ENCODE measurements at regions of chr9 and their contacts with region 1.

Region 1: DNA sequence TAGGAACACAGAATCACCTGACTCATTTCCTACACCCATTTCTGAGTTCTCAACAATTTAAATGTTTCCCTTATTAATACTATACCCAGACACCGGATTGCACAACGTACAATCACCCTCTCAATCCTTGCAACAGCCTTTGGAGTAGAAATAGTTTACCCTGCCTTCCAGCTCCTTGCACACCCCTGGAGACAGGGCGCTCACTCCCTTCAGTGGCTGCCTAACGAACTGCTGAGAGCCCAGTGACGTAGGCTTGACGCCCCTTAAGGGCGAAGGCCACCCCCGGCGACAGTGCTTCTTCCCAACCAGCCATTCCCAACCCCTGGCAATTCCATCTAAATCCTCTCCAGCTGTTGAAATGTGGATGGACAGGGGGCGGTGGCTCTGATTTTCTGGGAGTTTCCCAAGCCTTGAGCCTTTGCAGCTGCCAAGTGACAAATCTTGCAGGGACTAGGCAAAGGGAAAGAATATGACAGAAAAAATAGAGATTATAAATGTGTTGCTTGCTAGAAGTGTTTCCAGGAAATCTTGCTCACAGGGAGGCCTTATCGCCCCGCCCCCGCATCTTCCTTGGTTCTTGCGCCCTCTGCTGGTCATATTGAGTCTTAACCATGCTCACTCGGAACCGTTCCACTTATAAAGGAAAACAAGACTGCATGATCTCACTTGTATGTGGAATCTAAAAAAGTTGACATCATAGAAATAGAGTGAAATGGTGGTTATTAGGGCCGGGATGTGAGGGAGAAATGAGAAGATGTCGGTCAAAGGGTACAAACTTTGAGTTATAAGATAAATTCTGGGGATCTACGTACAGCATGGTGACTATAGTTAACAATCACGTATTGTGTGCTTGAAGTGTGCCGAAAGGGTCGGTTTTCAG is 7.6 kb upstream of the BARX1 start:
- H3K4me3 ChIP-seq: no peak overlapping the region
- H3K27ac ChIP-seq: no peak overlapping the region
- H3K4me1 ChIP-seq: no peaks in the 10 kb centered on the region
- CTCF ChIP-seq: 0 out of 2 replicates have a peak, but pooled peaks have one; percentile 7

Region 2: DNA sequence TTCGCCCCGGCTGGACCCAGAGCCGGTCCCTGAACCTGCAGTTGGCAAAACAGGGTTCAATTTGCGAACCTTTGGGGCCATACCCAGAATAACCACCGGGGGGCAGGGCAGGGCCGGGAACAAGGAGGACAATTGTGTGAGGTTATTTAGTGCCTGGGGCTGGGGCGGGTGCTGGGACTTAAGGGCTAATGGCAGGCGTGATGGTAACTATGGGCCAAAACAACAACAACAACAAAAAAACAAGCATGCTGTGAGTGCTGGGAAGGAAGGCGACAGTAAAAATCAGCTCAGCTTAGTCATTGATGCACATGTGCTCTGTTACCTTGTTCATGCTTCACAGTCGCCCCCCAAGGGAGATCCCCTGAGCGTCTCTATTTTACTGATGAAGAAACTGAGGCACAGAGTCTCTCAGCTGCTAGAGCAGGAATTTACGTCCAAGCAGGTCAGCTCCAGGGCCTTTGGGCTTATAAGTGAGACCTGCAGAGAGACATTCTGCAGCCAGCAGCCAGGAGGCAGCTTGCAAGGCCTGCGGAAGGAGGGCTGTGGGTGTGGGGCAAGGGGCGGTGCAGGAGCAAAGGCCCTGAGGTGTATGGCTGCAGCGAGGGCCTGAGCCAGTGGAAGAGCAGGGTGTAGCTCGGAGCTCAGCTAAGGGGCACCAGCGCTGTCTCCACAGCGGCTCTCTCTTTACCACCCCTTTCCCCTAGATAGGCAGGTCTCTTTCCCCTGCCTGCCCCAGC is 280.4 kb before region 1 on chr9:
- CTCF ChIA-PET with region 1: interaction called, 96 read pairs
- POLR2A ChIA-PET with region 1: no interaction called
- H3K4me3 ChIP-seq: no peak overlapping the region
- H3K27ac ChIP-seq: no peak overlapping the region
- H3K4me1 ChIP-seq: no peaks in the 10 kb centered on the region
- CTCF ChIP-seq: peak; percentile 49

Region 3: GRCh38 chr9:93886911-93887310 is 75.9 kb before region 1 on chr9:
- CTCF ChIA-PET with region 1: no interaction called
- POLR2A ChIA-PET with region 1: no interaction called
- H3K4me3 ChIP-seq: no peak overlapping the region
- H3K27ac ChIP-seq: no peak overlapping the region
- H3K4me1 ChIP-seq: no peaks in the 10 kb centered on the region
- CTCF ChIP-seq: no peak

Region 4: DNA sequence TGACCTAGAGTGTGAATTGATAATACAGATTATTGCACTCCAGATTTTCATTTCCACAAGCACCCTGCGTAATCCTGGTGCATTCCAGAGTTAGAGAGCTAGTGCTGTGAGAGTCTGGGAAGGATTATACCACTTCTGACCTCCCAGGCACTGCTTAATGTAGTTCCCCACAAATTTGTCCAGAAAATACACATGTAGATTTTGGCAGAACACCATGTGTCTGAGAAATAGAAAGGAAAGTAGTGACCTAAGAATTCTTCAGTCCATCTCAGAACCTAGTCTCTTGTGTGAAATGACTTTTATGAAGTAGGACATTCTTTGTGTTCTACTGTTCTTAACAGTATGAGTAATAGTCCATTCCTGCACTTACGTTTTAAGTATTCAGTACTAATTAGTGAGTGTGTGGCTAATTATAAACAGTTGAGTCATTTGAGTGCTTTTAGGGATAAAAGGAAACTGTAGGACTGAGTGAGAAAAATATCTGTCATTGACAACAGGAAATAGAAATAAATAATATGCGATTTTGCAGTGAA is 93.7 kb after region 1 on chr9:
- CTCF ChIA-PET with region 1: no interaction called
- POLR2A ChIA-PET with region 1: no interaction called
- H3K4me3 ChIP-seq: no peak overlapping the region
- H3K27ac ChIP-seq: no peak overlapping the region
- H3K4me1 ChIP-seq: no peaks in the 10 kb centered on the region
- CTCF ChIP-seq: no peak